ENCODE measurements at regions of chr17 and their contacts with region 1.

Region 1: DNA sequence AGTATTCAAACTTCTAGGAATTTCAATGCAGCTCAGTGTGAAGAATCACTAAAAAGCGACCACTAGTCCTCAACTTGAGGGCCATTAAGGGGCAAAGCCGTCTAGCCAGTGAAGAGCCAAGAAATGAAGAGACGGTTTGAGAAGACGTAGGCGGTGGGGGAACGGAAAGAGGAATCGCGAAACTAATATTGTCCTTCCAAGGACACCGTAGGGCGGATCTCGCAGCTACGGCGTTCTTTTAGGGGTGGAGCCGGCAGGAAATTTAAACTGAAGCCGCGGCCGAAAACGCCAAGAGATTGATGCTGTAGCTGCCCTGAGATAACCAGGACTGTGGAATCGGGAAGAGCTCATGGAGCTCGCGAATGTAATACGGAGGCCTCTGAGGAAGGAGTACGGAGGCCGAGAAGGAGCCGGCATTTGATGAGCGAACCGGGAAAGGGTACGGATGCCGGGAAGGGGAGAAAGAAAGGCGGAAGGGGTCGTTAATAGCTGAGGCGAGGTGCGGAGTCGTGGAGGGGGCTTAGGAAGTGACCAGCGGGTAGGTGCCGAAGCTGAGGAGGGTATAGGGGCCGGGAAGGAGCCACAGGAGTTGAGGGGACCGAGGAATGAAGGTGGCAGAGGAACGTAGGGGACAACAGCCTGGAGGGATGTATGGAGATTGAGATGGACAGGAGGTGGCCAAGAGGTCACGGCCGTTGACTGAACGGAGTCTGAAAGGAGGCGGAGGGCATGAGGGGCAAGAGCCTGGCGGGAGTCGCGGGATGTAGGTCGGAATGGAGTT is at the start of gene DBF4B:
- H3K4me3 ChIP-seq: peak within 1 kb of the TSS; percentile 97
- H3K27ac ChIP-seq: peak within 1 kb of the TSS; percentile 82
- H3K4me1 ChIP-seq: peaks cover 12% of the 10 kb centered on the region
- CTCF ChIP-seq: no peak

Region 2: DNA sequence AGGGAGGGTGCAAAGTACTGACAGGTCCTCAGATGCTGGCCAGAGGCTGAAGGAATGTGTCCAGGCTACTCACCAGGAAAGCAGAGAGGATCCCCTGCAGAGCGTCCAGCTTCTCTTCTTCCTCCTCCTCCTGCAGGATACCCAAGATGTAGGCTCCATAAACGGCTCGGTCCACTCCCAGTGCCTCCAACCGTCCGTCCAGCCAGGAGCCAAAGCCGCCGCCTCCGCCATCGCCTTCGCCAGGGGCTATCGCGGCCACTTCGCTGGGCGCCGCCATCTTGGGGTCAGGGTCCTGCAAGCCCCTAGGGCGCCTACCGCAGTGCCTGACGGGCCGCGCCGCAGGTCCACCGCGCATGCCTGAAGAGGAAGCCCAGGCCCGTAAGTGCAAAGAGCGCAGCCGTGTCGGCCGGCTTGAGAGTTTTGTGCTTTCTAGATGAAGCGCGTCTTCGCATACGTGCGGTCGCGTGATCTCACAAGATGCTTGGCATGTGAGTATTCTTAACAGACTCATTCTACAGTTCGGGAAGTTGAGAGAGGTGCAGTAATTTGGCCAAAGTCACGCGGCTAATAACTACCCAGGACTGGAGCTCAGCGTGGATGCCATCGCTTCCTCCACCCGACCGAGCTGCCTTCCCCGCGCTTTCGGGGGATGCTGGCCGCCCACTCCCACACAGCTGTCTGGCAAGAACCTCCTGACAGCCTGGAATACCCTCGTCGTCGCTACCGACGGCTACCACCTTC is 18.9 kb before region 1 on chr17 and contains the start of gene CCDC43:
- CTCF ChIA-PET with region 1: interaction called, 3 read pairs
- POLR2A ChIA-PET with region 1: interaction called, 19 read pairs
- H3K4me3 ChIP-seq: peak within 1 kb of the TSS; percentile 86
- H3K27ac ChIP-seq: peak within 1 kb of the TSS; percentile 72
- H3K4me1 ChIP-seq: peaks cover 2% of the 10 kb centered on the region; the same call in 1 of the 2 replicates
- CTCF ChIP-seq: no peak